ENCODE measurements at regions of chr2 and their contacts with region 1.

Region 1: GRCh38 chr2:119659601-119660342 is 19.2 kb upstream of the TMEM177 start:
- DNase-seq: peak in 5 of 7 donors; percentile 46 to 70 (median 50)
- H3K4me3 ChIP-seq: no peak overlapping the region
- H3K27ac ChIP-seq: no peak overlapping the region
- H3K4me1 ChIP-seq: no peaks in the 10 kb centered on the region
- H3K27me3 ChIP-seq: no peaks in the 10 kb centered on the region
- CTCF ChIP-seq: peak; percentile 76 to 93 (median 84)
- POLR2A ChIP-seq: no peak

Region 2: GRCh38 chr2:119311356-119311755 is 348.4 kb before region 1 on chr2:
- intact Hi-C with region 1: no loop called
- DNase-seq: no peak
- H3K4me3 ChIP-seq: no peak overlapping the region
- H3K27ac ChIP-seq: no peak overlapping the region
- H3K4me1 ChIP-seq: no peaks in the 10 kb centered on the region
- H3K27me3 ChIP-seq: no peaks in the 10 kb centered on the region
- CTCF ChIP-seq: no peak
- POLR2A ChIP-seq: no peak

Region 3: GRCh38 chr2:119407430-119408220 is 252.1 kb before region 1 on chr2:
- intact Hi-C with region 1: loop called (anchors 5 to 10 kb)
- DNase-seq: peak; percentile 42 to 82 (median 59)
- H3K4me3 ChIP-seq: no peak overlapping the region
- H3K27ac ChIP-seq: no peak overlapping the region
- H3K4me1 ChIP-seq: peaks cover 0 to 7% of the 10 kb centered on the region in 2 donors
- H3K27me3 ChIP-seq: no peaks in the 10 kb centered on the region
- CTCF ChIP-seq: peak; percentile 72 to 97 (median 91)
- POLR2A ChIP-seq: no peak

Region 4: DNA sequence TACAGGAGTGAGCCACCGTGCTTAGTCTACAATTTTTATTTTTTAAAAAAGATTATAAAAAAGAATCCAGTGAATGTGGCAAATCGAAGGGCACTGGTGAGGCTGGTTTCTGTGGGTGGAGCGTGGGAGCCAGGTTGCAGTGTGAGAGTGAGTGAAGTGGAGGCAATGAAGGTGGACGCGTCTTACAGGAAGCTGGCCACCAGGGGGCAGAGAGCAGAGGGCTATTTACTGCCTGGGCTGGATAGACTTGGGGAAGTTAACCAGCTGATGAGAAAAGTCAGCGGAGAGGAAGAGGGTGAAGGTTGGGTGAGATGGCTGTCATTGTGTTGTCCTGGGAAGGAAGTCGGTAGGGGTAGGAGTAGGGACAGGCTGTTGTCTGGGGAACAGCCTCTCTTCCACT is 142.3 kb before region 1 on chr2:
- intact Hi-C with region 1: loop called (anchors 5 to 10 kb)
- DNase-seq: peak; percentile 63 to 83 (median 74)
- H3K4me3 ChIP-seq: no peak overlapping the region
- H3K27ac ChIP-seq: no peak overlapping the region
- H3K4me1 ChIP-seq: no peaks in the 10 kb centered on the region
- H3K27me3 ChIP-seq: peaks cover 4% of the 10 kb centered on the region
- CTCF ChIP-seq: peak; percentile 49 to 82 (median 70)
- POLR2A ChIP-seq: no peak

Region 5: GRCh38 chr2:119523952-119524694 is 135.6 kb before region 1 on chr2 and contains the start of gene SCTR:
- intact Hi-C with region 1: loop called (anchors 5 to 10 kb)
- DNase-seq: peak in 1 of 7 donors; percentile 14
- H3K4me3 ChIP-seq: peak within 1 kb of the TSS in 1 of 4 donors; percentile 32
- H3K27ac ChIP-seq: no peak within 1 kb of the TSS
- H3K4me1 ChIP-seq: no peaks in the 10 kb centered on the region
- H3K27me3 ChIP-seq: peaks cover 26% of the 10 kb centered on the region
- CTCF ChIP-seq: peak in 1 of 6 experiments; percentile 20
- POLR2A ChIP-seq: no peak
- total RNA-seq, gene SCTR: 0.33 to 1.6 (median 0.44) TPM in 4 of 9 donors, not detected in the others

Region 6: DNA sequence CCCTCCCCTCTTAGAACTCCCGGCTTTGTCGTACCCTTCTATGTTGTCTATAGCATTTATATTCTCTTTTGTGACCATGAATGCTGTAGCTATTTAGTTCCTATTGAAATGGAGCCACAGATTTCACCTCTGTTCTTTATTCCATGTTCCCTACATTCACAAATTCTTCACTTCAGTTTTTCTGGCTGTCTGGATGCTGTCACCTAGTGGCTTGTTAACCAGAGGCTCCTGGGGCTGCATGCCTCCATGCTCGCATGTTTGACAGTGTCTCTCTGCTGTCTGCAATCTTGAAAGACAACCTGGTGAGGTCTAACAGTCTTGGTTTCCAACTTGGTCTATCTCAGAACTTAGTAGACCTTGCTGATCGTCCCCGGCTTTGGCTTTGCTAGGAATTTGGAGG is 67.3 kb before region 1 on chr2:
- intact Hi-C with region 1: no loop called
- DNase-seq: no peak
- H3K4me3 ChIP-seq: no peak overlapping the region
- H3K27ac ChIP-seq: no peak overlapping the region
- H3K4me1 ChIP-seq: no peaks in the 10 kb centered on the region
- H3K27me3 ChIP-seq: no peaks in the 10 kb centered on the region
- CTCF ChIP-seq: no peak
- POLR2A ChIP-seq: no peak

Region 7: DNA sequence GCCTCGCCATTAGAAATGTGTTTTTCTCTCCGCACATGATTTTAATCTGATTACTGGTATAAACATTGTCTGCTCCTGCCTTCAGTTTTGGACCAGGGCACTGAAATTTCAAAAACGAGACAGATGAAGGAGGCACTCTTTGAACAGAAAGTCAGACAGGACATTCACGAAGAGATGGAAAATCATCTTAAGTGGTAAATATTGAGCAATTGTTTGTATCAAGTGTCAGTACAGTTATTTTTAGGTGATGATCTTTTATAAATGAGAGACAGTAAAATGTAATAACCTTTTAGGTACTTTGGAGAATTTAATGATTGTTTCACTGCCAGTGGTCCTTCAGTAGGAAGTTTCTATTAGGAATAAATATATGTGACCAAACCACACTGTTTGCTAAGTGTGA is 54.7 kb before region 1 on chr2:
- intact Hi-C with region 1: no loop called
- DNase-seq: no peak
- H3K4me3 ChIP-seq: no peak overlapping the region
- H3K27ac ChIP-seq: no peak overlapping the region
- H3K4me1 ChIP-seq: no peaks in the 10 kb centered on the region
- H3K27me3 ChIP-seq: no peaks in the 10 kb centered on the region
- CTCF ChIP-seq: no peak
- POLR2A ChIP-seq: no peak